CD4-positive, alpha-beta memory T cell (primary cell): ENCODE measurements at regions of chr15 and their contacts with region 1.

Region 1: DNA sequence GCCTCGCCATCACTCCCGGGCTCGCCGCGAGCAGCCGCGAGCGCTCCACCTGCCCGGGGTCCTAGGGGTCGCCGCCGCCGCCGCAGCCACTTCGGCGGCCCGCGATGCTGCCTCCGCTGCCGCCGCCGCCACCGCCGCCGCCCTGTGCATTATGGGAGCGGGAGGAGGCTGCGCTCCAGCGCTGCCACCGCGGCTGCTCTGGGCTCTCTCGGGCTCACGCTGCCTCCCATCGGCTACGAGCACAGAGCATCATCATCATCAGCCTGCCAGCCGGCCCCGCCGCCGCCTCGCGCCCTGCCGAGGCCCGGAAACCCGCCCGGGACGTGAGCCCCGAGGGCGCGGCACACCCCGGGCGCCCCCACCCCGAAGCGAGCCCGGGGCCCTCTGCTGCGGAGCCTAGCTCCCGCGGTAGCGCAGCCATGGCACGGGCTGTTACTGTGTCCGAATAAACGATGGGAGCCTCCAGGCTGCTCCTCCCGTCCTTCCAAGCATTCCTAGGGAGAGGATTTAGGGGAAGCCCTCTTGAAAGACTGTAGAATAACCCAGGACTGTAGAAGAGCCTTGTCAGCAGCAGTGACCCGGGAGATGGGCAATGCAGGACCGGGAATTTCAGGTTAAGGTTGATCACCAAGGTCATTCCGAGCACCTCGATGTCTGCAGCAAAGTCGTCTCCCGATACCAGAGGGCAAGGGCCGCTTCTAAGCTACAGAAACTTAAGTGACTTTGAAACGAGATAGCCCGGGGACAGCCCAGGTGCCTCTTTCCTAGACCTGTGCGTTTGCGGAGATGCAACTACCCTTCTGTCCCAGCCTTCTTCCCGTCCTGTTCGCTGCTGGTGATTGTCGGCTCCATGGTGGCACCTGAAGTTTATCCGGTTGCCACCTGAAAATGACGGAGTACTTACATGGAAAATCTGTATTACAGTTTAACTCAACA is 579 bp upstream of the MYO5A start:
- DNase-seq: peak; percentile 84 to 87 (median 87)
- H3K4me3 ChIP-seq: peak overlapping the region; percentile 7 to 58
- H3K4me3 Mint-ChIP-seq: peak overlapping the region; percentile 79 to 98 (median 83)
- H3K27ac ChIP-seq: peak overlapping the region; percentile 91
- H3K27ac Mint-ChIP-seq: peak overlapping the region; percentile 85 to 97 (median 93)
- H3K4me1 ChIP-seq: peaks cover 20% of the 10 kb centered on the region
- H3K4me1 Mint-ChIP-seq: peaks cover 30 to 40% (median 35%) of the 10 kb centered on the region in 4 donors
- H3K27me3 ChIP-seq: no peaks in the 10 kb centered on the region
- H3K27me3 Mint-ChIP-seq: no peaks in the 10 kb centered on the region

Region 2: DNA sequence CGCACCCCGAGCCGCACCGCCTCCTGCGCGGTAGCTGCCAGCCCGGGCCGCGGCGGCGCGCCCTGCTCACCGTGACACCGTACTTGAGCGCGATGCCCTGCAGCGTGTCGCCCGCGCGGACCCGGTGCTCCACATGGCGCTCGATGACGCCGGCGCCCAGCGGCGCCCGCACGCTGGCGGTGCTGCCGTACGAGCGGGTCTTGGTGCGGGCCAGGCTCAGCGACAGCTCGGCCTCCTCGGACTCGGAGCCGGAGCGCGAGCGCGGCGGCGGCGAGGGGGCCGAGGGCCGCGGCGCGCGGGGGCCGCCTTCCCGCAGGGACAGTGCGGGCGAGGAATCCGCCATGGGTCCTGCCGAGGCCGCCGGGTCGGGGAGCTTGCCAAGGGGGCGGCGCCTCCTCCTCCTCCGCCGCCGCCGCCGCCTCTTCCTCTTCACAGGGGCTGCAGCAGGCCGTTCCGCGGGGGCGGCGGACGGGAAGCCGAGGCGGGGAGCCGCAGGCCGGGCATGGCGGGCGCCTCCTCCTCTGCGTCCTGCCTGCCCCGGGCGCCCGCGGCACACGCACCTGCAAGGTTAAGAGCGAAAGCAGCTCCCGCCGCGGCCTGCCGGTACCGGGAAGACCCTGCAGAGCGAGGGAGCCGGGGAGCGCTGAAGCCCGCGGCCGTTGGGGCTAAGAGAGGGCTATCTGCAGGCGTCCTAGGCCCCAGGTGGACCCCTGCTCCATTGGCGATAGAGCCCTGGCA is 791.8 kb before region 1 on chr15 and contains the start of gene LYSMD2:
- CTCF ChIA-PET with region 1: no interaction called
- POLR2A ChIA-PET with region 1: interaction called, 3 read pairs
- intact Hi-C with region 1: loop called (anchors 10 kb)
- DNase-seq: peak; percentile 66 to 75 (median 72)
- H3K4me3 ChIP-seq: peak within 1 kb of the TSS; percentile 57 to 62
- H3K4me3 Mint-ChIP-seq: peak within 1 kb of the TSS; percentile 90 to 97 (median 92)
- H3K27ac ChIP-seq: peak within 1 kb of the TSS; percentile 65
- H3K27ac Mint-ChIP-seq: peak within 1 kb of the TSS; percentile 97 to 98 (median 98)
- H3K4me1 ChIP-seq: peaks cover 66% of the 10 kb centered on the region
- H3K4me1 Mint-ChIP-seq: peaks cover 45 to 66% (median 53%) of the 10 kb centered on the region in 4 donors
- H3K27me3 ChIP-seq: no peaks in the 10 kb centered on the region
- H3K27me3 Mint-ChIP-seq: no peaks in the 10 kb centered on the region
- total RNA-seq, gene LYSMD2: 33.0 to 35.2 TPM

Region 3: GRCh38 chr15:52379395-52380106 is 149.7 kb before region 1 on chr15:
- CTCF ChIA-PET with region 1: no interaction called
- POLR2A ChIA-PET with region 1: interaction called, 4 read pairs
- intact Hi-C with region 1: loop called (anchors 5 kb)
- DNase-seq: peak in 1 of 5 donors; percentile 3
- H3K4me3 ChIP-seq: no peak overlapping the region
- H3K4me3 Mint-ChIP-seq: peak overlapping the region in 2 of 8 donors; percentile 5 to 49
- H3K27ac ChIP-seq: no peak overlapping the region
- H3K27ac Mint-ChIP-seq: peak overlapping the region in 5 of 7 donors; percentile 7 to 72 (median 54)
- H3K4me1 ChIP-seq: no peaks in the 10 kb centered on the region
- H3K4me1 Mint-ChIP-seq: peaks cover 5 to 11% (median 7%) of the 10 kb centered on the region in 4 donors
- H3K27me3 ChIP-seq: no peaks in the 10 kb centered on the region
- H3K27me3 Mint-ChIP-seq: no peaks in the 10 kb centered on the region

Region 4: DNA sequence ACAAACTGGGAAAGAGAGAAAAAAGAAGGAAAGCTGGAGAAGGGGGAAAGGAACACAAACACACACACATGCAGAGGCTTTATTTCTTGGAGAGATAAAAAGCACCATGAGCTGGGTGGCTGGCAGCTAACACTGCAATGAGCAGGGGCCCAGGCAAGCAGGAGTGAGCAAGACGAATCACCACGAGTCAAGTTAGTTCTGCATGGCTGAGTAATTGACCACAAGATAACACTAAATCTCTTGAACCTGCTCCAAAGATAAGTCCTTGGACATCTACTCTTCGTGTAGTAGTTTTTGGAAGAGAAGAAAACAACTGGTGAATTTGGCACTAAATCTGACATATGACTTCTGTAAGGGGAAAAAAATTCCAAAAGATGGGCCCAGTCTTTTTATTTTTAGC is 101.5 kb before region 1 on chr15:
- CTCF ChIA-PET with region 1: interaction called, 4 read pairs
- POLR2A ChIA-PET with region 1: no interaction called
- intact Hi-C with region 1: loop called (anchors 5 kb)
- DNase-seq: no peak
- H3K4me3 ChIP-seq: no peak overlapping the region
- H3K4me3 Mint-ChIP-seq: no peak overlapping the region
- H3K27ac ChIP-seq: no peak overlapping the region
- H3K27ac Mint-ChIP-seq: peak overlapping the region in 1 of 7 donors; percentile 14
- H3K4me1 ChIP-seq: no peaks in the 10 kb centered on the region
- H3K4me1 Mint-ChIP-seq: peaks cover 7 to 11% (median 9%) of the 10 kb centered on the region in 4 donors
- H3K27me3 ChIP-seq: no peaks in the 10 kb centered on the region
- H3K27me3 Mint-ChIP-seq: no peaks in the 10 kb centered on the region

Region 5: GRCh38 chr15:52481915-52482314 is 47.3 kb before region 1 on chr15:
- CTCF ChIA-PET with region 1: interaction called, 4 read pairs
- POLR2A ChIA-PET with region 1: interaction called, 50 read pairs
- intact Hi-C with region 1: loop called (anchors 1 kb)
- DNase-seq: peak; percentile 84 to 90 (median 85)
- H3K4me3 ChIP-seq: no peak overlapping the region
- H3K4me3 Mint-ChIP-seq: peak overlapping the region; percentile 57 to 86 (median 65)
- H3K27ac ChIP-seq: peak overlapping the region; percentile 44
- H3K27ac Mint-ChIP-seq: peak overlapping the region; percentile 67 to 97 (median 91)
- H3K4me1 ChIP-seq: peaks cover 88% of the 10 kb centered on the region
- H3K4me1 Mint-ChIP-seq: peaks cover 62 to 87% (median 69%) of the 10 kb centered on the region in 4 donors
- H3K27me3 ChIP-seq: no peaks in the 10 kb centered on the region
- H3K27me3 Mint-ChIP-seq: no peaks in the 10 kb centered on the region

Region 6: GRCh38 chr15:52568601-52569256 is 39.5 kb after region 1 on chr15 and contains the start of gene ARPP19:
- CTCF ChIA-PET with region 1: no interaction called
- POLR2A ChIA-PET with region 1: interaction called, 14 read pairs
- intact Hi-C with region 1: loop called (anchors 1 kb)
- DNase-seq: peak; percentile 78 to 84 (median 80)
- H3K4me3 ChIP-seq: peak within 1 kb of the TSS; percentile 64 to 80
- H3K4me3 Mint-ChIP-seq: peak within 1 kb of the TSS; percentile 94 to 100 (median 96)
- H3K27ac ChIP-seq: peak within 1 kb of the TSS; percentile 98
- H3K27ac Mint-ChIP-seq: peak within 1 kb of the TSS; percentile 98 to 100 (median 100)
- H3K4me1 ChIP-seq: peaks cover 44% of the 10 kb centered on the region
- H3K4me1 Mint-ChIP-seq: peaks cover 31 to 46% (median 38%) of the 10 kb centered on the region in 4 donors
- H3K27me3 ChIP-seq: no peaks in the 10 kb centered on the region
- H3K27me3 Mint-ChIP-seq: no peaks in the 10 kb centered on the region
- total RNA-seq, gene ARPP19: 105 to 130 TPM

Region 7: GRCh38 chr15:52730173-52730572 is 200.9 kb after region 1 on chr15:
- CTCF ChIA-PET with region 1: no interaction called
- POLR2A ChIA-PET with region 1: interaction called, 4 read pairs
- intact Hi-C with region 1: loop called (anchors 1 kb)
- DNase-seq: peak; percentile 57 to 75 (median 73)
- H3K4me3 ChIP-seq: no peak overlapping the region
- H3K4me3 Mint-ChIP-seq: peak overlapping the region in 5 of 8 donors; percentile 16 to 64 (median 41)
- H3K27ac ChIP-seq: no peak overlapping the region
- H3K27ac Mint-ChIP-seq: peak overlapping the region; percentile 51 to 91 (median 80)
- H3K4me1 ChIP-seq: peaks cover 16% of the 10 kb centered on the region
- H3K4me1 Mint-ChIP-seq: peaks cover 8 to 21% (median 14%) of the 10 kb centered on the region in 4 donors
- H3K27me3 ChIP-seq: no peaks in the 10 kb centered on the region
- H3K27me3 Mint-ChIP-seq: peaks cover 0 to 2% of the 10 kb centered on the region in 2 donors